Activated CD4-positive, alpha-beta memory T cell treated with anti-CD3 and anti-CD28 coated beads, Interleukin-2, amount 10 ng/mL, durations not matched to agents 7 days and 5 days (primary cell): ENCODE measurements at regions of chr17 and their contacts with region 1.

Region 1: DNA sequence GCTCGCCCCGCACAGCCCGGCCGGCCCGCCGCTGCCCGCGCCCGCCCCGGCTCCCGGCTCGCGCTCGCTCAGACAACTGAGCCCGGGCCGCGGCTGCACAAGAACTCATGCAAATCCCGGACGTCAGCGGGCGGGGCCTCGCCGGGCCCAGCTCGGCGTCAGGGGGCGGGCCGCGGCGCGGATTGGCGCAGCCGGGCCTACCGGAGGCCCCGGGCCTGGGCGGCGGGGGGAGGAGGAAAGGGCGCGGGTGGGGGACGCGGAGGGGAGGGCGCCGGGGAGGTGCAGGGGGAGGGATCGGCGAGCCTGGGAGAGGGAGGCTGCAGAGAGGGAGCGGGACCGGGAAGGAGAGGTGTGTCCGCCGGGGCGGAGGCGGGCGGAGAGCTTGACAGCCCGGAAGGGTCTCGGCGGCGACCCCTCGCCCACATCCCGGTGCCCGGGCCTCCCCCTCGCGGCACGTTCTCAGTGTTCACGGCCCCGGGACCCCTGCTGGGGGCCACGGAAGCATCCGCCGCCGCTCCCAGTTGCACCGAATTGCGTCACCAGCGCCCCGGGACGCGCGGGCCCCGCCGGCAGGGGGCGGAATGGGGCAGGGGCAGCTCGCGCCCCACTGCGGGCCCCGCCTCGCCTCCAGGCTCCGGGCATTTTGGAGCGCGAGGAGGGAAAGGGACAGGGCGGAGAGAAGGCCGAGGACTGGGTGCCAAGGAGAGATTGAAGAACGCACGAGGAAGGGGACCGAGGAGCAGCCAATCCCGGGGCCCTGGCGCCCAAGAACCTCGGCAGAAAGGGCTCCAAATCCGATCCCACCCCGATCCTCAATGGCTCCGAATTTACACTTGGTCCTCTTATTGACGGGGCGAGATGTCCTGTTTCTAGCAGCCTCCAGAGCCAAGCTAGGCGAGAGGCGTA is at the start of gene CBX4:
- DNase-seq: peak; percentile 94
- H3K4me3 Mint-ChIP-seq: peak within 1 kb of the TSS; percentile 87
- H3K27ac Mint-ChIP-seq: peak within 1 kb of the TSS; percentile 86
- H3K4me1 Mint-ChIP-seq: peaks cover 43% of the 10 kb centered on the region
- H3K27me3 Mint-ChIP-seq: peaks cover 31% of the 10 kb centered on the region
- total RNA-seq, gene CBX4: 34.4 to 36.5 TPM

Region 2: DNA sequence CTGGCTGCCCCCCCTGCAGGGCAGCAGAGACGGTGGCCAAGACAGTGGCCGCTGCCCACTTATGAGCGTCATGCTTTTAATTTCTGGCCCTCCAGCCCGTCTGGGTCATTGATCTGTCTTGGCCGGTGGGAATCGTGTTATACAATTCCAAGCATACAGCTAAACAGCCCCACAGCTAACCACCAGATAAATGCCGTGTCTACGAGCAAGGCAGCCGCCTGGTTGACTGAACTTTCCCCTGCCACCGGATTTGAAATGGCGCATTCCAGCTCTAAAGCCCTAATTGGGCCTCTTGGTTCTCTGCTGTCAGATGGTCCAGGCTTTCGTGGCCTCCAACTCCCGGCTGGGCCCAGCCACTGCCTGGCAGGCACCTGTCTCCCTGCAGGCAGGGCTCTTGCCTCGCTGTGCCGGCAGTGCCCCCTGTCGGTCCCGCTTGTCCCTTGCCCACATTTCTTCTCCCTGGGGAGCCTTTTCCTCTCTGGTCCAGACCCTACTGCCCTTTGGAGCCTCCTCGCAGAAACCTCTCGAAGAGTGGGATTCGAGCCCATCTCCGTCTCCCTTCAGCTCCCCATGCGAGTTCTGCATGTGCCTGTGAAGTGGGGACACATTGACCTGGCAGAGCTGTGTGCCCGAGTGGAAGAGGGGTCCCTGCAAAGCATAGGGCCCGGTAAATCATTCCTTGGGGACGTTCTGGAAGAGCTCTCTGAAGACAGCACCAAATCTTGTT is 227.0 kb before region 1 on chr17:
- CTCF ChIA-PET with region 1: no interaction called
- POLR2A ChIA-PET with region 1: no interaction called
- DNase-seq: peak; percentile 62
- H3K4me3 Mint-ChIP-seq: no peak overlapping the region
- H3K27ac Mint-ChIP-seq: no peak overlapping the region
- H3K4me1 Mint-ChIP-seq: no peaks in the 10 kb centered on the region
- H3K27me3 Mint-ChIP-seq: peaks cover 26% of the 10 kb centered on the region

Region 3: DNA sequence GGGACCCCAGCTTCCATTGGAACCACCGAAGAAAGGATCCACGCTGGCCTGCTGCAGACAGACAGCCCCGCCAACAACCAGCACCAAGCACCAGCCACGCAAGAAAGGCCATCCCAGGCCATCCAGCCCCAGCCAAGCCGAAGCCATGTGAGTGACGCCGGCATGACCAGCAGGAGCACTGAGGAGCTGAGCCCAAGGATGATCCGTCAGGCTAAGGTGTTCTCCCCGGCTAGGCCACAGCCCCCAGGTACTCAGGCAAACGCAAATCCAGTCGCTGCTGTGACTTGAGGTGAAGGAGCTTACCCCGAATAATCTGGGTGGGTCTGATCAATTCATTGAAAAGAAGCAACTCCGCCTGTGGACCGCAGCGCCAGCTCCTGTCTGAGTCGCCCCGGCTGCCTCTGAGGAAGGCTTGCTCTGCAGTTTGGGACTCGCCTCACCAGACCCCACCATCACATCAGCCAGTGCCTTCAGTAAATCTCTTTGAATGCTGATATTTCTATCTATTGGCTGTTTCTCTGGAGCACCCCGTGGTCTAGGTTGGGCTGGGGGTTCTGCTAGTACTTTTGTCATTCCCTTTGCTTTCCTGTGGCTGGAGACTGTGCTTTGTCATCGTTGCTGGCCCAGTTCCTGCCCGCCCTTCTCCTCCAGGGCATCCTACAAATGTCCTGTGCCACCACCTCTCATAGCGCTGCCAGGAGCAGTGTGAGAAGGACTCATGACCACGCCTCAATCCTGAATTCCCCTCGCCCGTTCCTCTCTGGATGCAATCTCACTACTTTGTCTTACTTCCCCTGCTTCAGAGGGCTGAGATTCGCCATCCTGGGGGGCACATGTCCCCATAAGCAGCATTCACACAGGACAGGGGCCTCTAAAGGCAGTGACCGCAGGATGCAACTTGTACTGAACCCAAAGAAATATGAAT is 69.8 kb before region 1 on chr17:
- CTCF ChIA-PET with region 1: no interaction called
- POLR2A ChIA-PET with region 1: no interaction called
- DNase-seq: no peak
- H3K4me3 Mint-ChIP-seq: no peak overlapping the region
- H3K27ac Mint-ChIP-seq: no peak overlapping the region
- H3K4me1 Mint-ChIP-seq: no peaks in the 10 kb centered on the region
- H3K27me3 Mint-ChIP-seq: peaks cover 25% of the 10 kb centered on the region

Region 4: DNA sequence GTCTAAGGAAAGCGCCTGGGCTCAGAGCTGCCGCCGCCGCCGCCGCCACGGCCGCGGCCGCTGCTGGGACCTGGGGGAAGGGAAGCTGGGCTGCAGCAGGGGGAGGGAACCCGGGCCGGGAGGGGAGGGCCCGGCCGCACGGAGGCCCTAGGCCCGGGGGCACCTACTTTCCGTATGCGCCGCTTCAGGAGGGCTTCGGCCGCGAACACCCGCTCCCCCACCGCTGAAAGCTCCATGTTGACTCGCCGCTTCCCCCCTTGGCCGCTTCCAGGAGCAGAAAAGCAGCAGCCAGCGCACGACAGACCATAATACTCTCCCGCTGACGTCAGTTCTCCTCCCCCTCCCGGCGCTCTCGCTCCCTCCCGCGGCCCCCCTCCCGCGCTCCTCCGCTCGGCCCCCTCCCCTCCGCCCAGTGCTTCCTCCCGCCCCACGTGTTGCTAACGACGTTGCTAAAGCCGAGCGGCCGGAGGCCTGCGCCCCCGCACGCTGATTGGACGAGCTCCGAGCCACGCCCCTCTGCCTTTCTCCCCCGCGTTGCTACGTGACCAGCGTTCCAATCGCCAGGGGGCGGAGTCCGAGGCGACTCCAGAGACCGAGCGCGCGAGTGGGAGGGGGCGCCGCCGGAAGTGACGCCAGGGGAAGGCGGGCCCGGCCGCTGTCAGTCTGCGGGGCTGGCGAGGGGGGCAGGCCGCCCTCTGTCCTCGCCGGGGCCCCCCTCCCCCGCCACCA is 42.7 kb before region 1 on chr17 and contains the start of gene CBX8:
- CTCF ChIA-PET with region 1: interaction called, 23 read pairs
- POLR2A ChIA-PET with region 1: interaction called, 58 read pairs
- DNase-seq: peak; percentile 100
- H3K4me3 Mint-ChIP-seq: peak within 1 kb of the TSS; percentile 83
- H3K27ac Mint-ChIP-seq: peak within 1 kb of the TSS; percentile 70
- H3K4me1 Mint-ChIP-seq: peaks cover 33% of the 10 kb centered on the region
- H3K27me3 Mint-ChIP-seq: peaks cover 44% of the 10 kb centered on the region
- total RNA-seq, gene CBX8: 5.7 to 6.7 TPM

Region 5: GRCh38 chr17:79803997-79804855 is 35.4 kb before region 1 on chr17:
- CTCF ChIA-PET with region 1: interaction called, 4 read pairs
- POLR2A ChIA-PET with region 1: interaction called, 58 read pairs
- DNase-seq: peak; percentile 70
- H3K4me3 Mint-ChIP-seq: peak overlapping the region; percentile 65
- H3K27ac Mint-ChIP-seq: peak overlapping the region; percentile 65
- H3K4me1 Mint-ChIP-seq: peaks cover 37% of the 10 kb centered on the region
- H3K27me3 Mint-ChIP-seq: peaks cover 84% of the 10 kb centered on the region

Region 6: GRCh38 chr17:79810130-79811010 is 29.2 kb before region 1 on chr17:
- CTCF ChIA-PET with region 1: interaction called, 14 read pairs
- POLR2A ChIA-PET with region 1: interaction called, 52 read pairs
- DNase-seq: peak; percentile 82
- H3K4me3 Mint-ChIP-seq: peak overlapping the region; percentile 21
- H3K27ac Mint-ChIP-seq: no peak overlapping the region
- H3K4me1 Mint-ChIP-seq: peaks cover 32% of the 10 kb centered on the region
- H3K27me3 Mint-ChIP-seq: peaks cover 64% of the 10 kb centered on the region

Region 7: GRCh38 chr17:79818026-79818758 is 21.4 kb before region 1 on chr17:
- CTCF ChIA-PET with region 1: interaction called, 10 read pairs
- POLR2A ChIA-PET with region 1: interaction called, 4 read pairs
- DNase-seq: no peak
- H3K4me3 Mint-ChIP-seq: no peak overlapping the region
- H3K27ac Mint-ChIP-seq: no peak overlapping the region
- H3K4me1 Mint-ChIP-seq: peaks cover 11% of the 10 kb centered on the region
- H3K27me3 Mint-ChIP-seq: peaks cover 58% of the 10 kb centered on the region

Region 8: GRCh38 chr17:79923974-79924638 is 84.5 kb after region 1 on chr17:
- CTCF ChIA-PET with region 1: interaction called, 10 read pairs
- POLR2A ChIA-PET with region 1: interaction called, 3 read pairs
- DNase-seq: peak; percentile 73
- H3K4me3 Mint-ChIP-seq: peak overlapping the region; percentile 64
- H3K27ac Mint-ChIP-seq: peak overlapping the region; percentile 68
- H3K4me1 Mint-ChIP-seq: peaks cover 52% of the 10 kb centered on the region
- H3K27me3 Mint-ChIP-seq: peaks cover 8% of the 10 kb centered on the region

Region 9: DNA sequence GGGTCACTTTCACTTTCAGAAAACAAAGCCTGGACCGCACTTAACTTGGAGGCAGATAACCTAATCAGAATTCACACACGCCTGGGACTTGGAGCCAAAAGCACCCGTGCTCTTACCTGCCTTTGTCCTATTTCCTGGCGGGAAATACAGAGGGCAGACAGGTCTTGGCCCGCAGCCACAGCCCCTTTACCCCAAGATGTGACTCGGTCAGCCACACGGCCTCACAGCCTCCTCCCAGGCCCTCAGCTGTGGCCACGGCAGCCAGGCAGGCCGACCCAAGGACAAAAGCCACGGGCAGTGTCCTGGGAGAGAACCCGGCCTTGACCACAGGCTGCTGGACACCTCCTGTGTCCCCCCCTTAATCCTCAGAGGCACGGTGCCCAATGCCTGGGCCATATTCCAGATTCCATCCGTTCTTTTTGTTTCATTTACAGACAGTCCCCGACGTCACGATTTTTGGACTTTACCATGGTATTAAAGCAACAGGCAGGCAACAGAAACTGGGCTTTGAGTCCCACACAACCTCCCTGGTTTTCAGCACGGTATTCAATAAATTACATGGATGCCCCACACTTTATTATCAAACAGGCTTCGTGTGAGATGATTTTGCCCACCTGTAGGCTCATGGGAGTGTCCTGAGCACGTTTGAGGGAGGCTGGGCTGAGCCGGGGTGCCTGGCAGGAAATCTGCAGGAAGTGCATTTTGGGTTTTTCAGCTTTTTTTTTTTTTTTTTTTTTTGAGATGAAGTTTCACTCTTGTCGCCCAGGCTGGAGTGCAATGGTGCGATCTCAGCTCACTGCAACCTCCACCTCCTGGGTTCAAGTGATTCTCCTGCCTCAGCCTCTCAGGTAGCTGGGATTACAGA is 231.7 kb after region 1 on chr17:
- CTCF ChIA-PET with region 1: no interaction called
- POLR2A ChIA-PET with region 1: no interaction called
- DNase-seq: no peak
- H3K4me3 Mint-ChIP-seq: no peak overlapping the region
- H3K27ac Mint-ChIP-seq: no peak overlapping the region
- H3K4me1 Mint-ChIP-seq: peaks cover 8% of the 10 kb centered on the region
- H3K27me3 Mint-ChIP-seq: peaks cover 4% of the 10 kb centered on the region